GM13976 (cell line): ENCODE measurements at regions of chr1 and their contacts with region 1.

Region 1: GRCh38 chr1:162987866-162988265 is 81.3 kb upstream of the RGS4 start:
- DNase-seq: no peak
- CTCF ChIP-seq: no peak

Region 2: DNA sequence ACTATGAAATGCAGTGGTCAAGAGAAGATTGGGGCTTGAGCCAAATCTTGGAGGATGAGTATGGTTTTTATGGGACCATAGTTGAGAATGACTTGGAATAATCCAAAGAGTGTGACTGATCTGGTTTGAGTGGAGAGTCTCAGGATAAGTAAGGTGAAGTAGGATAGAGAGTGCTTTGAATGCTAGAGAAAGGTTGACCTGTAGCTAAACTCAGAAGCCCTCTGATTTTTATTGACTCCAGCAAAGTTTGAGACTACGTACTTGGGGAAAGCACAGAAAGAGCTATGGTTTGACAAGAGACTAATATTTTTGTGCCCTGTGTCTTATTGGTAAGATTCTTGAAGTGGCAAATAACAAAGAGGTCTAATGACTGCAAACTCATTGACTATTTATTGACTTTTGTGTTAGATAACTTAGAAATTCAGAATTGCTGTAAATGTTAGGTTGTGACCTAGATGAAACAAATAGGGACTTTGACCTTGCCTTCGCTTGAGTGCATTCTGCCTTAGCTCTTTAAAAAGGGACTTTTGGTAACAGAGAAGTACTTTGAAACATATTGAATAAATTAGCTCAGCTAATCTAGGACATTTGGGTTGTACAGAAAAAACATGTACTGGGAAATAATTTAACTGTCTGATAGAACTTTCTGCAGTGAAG is 391.2 kb before region 1 on chr1:
- in situ Hi-C with region 1: no loop called
- DNase-seq: no peak
- CTCF ChIP-seq: no peak

Region 3: DNA sequence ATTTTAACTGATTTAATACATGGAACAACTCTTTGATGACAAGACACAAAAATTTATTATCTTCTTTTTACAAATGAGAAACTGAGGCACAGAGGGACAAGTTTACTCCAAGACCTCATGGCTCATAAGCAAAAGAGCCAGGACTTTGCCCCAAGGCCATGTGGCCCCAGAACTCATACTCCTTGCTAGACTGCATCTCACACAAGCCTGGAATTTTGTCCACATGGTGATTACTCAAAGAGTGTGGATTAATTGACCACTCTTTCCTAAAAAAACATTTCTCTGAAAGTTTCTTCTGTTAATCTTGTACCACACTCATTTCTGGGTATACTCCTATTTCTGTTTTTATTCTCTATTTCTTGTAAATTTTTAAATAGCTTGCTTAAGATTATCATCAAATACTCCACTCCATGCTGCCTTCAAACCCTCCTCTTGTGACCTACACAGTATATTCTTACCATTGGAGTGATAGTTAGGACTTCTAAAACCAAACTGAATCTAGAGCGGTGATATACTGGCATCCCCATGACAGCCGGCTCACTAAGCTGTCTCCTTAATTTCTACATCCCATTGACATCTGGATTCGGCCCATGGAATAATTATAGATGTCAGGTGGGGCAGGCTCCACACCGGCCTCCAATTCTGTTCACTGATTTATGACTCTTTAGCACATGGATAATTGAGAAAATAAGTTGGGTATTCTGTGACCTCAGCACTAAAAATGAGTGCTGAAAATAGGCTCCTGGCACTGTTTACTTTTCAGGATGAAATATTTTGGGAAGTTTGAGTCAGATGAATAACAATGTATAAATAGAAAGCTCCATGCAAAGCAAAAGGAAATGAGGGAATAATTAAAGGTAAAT is 97.4 kb after region 1 on chr1:
- in situ Hi-C with region 1: loop called (anchors 25 kb)
- DNase-seq: no peak
- CTCF ChIP-seq: no peak